ENCODE measurements at regions of chr14 and their contacts with region 1.

Region 1: GRCh38 chr14:105168979-105169507 is 467 bp upstream of the JAG2 start:
- DNase-seq: no peak
- H3K4me3 ChIP-seq: peak overlapping the region; percentile 20 to 69 (median 48)
- H3K27ac ChIP-seq: peak overlapping the region in 1 of 2 donors; percentile 9
- H3K4me1 ChIP-seq: no peaks in the 10 kb centered on the region
- H3K27me3 ChIP-seq: peaks cover 0 to 10% of the 10 kb centered on the region in 2 donors
- CTCF ChIP-seq: peak in 1 of 3 donors; percentile 34
- POLR2A ChIP-seq: no peak

Region 2: GRCh38 chr14:104870420-104871144 is 298.5 kb before region 1 on chr14:
- intact Hi-C with region 1: no loop called
- DNase-seq: no peak
- H3K4me3 ChIP-seq: no peak overlapping the region
- H3K27ac ChIP-seq: no peak overlapping the region
- H3K4me1 ChIP-seq: peaks cover 0 to 3% of the 10 kb centered on the region in 2 donors
- H3K27me3 ChIP-seq: no peaks in the 10 kb centered on the region
- CTCF ChIP-seq: no peak
- POLR2A ChIP-seq: no peak

Region 3: DNA sequence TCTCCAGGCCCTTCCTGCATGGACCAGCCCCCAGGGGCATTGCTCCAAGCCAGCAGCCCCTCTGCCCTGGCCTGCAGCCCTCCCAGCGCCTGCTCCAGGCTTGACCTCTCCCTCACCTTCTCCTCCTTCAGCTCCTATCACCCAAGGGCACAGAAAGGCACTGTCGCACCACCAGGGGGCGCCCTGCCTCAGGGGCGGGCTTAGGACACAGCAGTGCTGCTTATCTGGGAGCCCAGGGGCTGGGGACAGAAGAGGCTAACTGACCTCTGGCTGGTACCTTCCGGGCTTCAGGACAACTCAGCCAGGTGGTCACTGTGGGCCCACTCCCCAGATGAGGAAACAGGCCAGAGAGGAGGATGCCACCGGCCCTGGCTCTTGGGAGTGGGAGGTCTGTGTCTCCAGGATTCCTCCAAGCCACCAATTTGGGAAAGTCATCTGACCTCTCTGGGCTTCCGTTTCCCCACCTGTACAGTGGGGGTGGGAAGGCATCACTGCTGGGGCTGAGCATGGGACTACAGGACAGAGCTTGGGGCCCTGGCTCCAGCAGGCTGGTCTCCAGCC is 78.5 kb before region 1 on chr14:
- intact Hi-C with region 1: loop called (anchors 5 kb)
- DNase-seq: peak; percentile 78 to 84
- H3K4me3 ChIP-seq: no peak overlapping the region
- H3K27ac ChIP-seq: peak overlapping the region; percentile 87 to 97
- H3K4me1 ChIP-seq: peaks cover 34 to 39% of the 10 kb centered on the region in 2 donors
- H3K27me3 ChIP-seq: no peaks in the 10 kb centered on the region
- CTCF ChIP-seq: peak; percentile 87 to 92 (median 88)
- POLR2A ChIP-seq: no peak

Region 4: GRCh38 chr14:105123981-105124765 is 44.9 kb before region 1 on chr14:
- intact Hi-C with region 1: no loop called
- DNase-seq: peak in 1 of 2 donors; percentile 11
- H3K4me3 ChIP-seq: no peak overlapping the region
- H3K27ac ChIP-seq: no peak overlapping the region
- H3K4me1 ChIP-seq: peaks cover 0 to 5% of the 10 kb centered on the region in 2 donors
- H3K27me3 ChIP-seq: peaks cover 0 to 3% of the 10 kb centered on the region in 2 donors
- CTCF ChIP-seq: no peak
- POLR2A ChIP-seq: no peak